Activated CD8-positive, alpha-beta memory T cell treated with anti-CD3 and anti-CD28 coated beads, Interleukin-2, amount 10 ng/mL, durations not matched to agents 7 days and 5 days (primary cell): ENCODE measurements at regions of chr9 and their contacts with region 1.

Region 1: DNA sequence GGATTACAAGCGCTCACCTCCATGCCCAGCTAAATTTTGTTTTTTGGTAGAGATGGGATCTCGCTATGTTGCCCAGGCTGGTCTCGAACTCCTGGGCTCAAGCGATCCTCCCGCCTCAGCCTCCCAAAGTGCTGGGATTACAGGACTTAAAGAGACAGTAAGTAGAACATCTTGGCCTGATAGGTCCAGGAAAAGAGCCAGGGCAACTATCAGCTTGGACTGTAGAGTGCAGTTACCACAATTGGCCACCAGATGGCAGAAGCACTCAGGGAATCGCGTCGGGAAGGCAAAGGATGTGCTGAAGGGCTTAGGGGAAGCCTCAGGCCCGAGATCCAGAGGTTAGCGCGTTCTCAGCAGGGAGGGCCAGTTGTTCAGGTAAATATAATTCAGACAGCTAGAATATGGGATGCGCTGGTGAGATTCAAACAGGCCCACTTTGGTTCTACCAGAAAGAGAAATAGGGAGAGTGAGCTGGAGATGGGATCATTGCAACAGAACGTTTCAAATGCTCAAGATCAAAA is 21.5 kb downstream of the C9orf57 start:
- DNase-seq: peak; percentile 69
- ATAC-seq: peak; percentile 83
- H3K4me3 Mint-ChIP-seq: no peak overlapping the region
- H3K27ac Mint-ChIP-seq: no peak overlapping the region
- H3K4me1 Mint-ChIP-seq: peaks cover 4% of the 10 kb centered on the region
- H3K27me3 Mint-ChIP-seq: peaks cover 20% of the 10 kb centered on the region

Region 2: GRCh38 chr9:72271613-72272478 is 232.9 kb after region 1 on chr9:
- CTCF ChIA-PET with region 1: interaction called, 49 read pairs
- DNase-seq: peak; percentile 66
- ATAC-seq: peak; percentile 64
- H3K4me3 Mint-ChIP-seq: no peak overlapping the region
- H3K27ac Mint-ChIP-seq: no peak overlapping the region
- H3K4me1 Mint-ChIP-seq: no peaks in the 10 kb centered on the region
- H3K27me3 Mint-ChIP-seq: peaks cover 16% of the 10 kb centered on the region

Region 3: DNA sequence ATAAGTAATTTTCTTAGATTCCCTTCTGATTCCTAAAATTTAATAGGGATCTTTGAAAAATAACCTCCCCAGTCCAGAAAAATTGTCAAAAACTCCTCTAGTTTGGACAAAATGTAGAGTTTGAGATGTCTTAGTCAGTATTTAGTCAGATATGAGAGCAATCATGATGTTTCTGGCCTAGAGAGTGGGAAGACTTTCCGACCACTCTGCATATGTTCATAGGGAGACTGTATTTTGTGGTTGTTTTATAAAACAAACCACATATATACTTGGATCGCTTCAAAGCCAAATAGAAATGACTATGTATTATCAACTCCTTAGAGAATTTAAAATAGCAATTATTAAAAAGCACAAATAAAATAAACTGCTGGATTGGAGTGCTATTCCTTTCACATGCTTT is 310.3 kb after region 1 on chr9:
- CTCF ChIA-PET with region 1: no interaction called
- DNase-seq: no peak
- ATAC-seq: no peak
- H3K4me3 Mint-ChIP-seq: no peak overlapping the region
- H3K27ac Mint-ChIP-seq: no peak overlapping the region
- H3K4me1 Mint-ChIP-seq: peaks cover 3% of the 10 kb centered on the region
- H3K27me3 Mint-ChIP-seq: no peaks in the 10 kb centered on the region